Ovary (tissue), 10 donors: ENCODE measurements at regions of chr11 and their contacts with region 1.

Region 1: DNA sequence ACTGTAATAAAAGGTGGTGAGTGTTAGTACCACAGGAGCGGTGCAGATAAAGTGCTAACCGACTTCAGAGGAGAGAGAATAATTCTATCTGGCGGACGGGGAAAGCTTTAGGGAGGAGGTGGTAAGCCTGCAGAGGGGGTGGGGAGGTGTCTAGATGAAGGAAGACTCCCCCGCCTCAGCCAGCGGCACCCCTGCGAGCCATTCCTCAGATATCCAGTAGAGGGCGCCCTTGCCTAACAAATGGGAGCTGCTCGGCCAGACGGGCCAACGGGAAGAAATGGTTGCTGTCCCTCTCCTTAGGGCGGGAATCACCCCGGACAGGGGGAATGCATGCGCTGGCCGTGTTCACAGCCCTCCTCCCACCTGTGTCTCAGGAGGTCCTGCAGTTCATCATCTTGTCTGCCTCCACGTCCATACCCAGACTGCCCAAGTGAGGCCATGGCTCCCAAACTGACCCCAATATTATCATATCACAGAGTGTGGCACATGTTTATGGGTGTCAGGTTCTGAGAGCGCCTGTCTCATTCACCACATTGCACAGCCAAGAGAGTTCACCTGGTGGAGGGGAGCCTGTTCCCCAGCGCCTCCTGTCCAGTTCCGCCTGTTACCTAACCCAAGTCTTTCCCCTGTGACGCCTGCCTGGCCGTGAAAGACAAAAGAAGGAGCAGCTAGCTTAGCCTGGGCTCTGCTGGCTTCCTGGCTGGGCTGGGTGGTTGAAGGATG is 85.5 kb downstream of the ST3GAL4 start:
- DNase-seq: peak; percentile 84 to 94 (median 89)
- H3K4me3 ChIP-seq: no peak overlapping the region
- H3K27ac ChIP-seq: no peak overlapping the region
- H3K4me1 ChIP-seq: peaks cover 2% of the 10 kb centered on the region
- H3K27me3 ChIP-seq: no peaks in the 10 kb centered on the region
- CTCF ChIP-seq: peak; percentile 94 to 97 (median 95)
- EP300 ChIP-seq: no peak
- POLR2A ChIP-seq: peak; percentile 12

Region 2: GRCh38 chr11:126711977-126712625 is 271.1 kb after region 1 on chr11:
- intact Hi-C with region 1: no loop called
- DNase-seq: no peak
- H3K4me3 ChIP-seq: no peak overlapping the region
- H3K27ac ChIP-seq: no peak overlapping the region
- H3K4me1 ChIP-seq: no peaks in the 10 kb centered on the region
- H3K27me3 ChIP-seq: no peaks in the 10 kb centered on the region
- CTCF ChIP-seq: no peak
- EP300 ChIP-seq: no peak
- POLR2A ChIP-seq: no peak

Region 3: DNA sequence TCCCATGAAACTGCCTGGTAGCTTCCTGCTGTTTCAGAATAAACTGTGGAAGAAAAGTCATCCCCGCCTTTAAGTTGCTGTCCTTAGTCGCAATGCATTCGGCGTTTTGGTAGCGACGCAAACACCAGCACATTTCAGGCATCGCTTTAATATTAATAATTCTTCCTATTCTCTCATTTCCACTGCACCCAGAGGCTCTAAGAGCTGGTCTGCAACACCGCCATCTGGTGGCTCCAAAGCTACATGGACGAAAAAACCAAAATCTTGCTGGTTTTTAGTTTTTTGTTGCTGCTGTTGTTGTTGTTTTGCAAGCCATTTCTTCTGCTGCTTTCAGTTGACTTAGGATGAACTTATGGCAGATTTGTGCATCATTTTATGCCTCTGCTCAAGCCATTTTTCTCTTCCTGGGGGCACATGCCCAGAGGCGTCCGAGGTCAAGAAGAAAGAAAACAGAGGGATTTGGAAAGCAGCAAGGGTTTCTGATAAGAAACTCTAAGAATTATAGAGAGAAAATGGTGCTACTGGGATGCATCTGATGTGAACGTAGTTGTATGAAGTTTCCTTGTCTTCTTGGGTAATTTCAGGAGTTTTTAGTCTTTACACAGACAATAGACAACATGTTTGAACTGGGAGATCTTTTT is 905.0 kb after region 1 on chr11:
- intact Hi-C with region 1: loop called in 1 of 4 experiments (anchors 10 kb)
- DNase-seq: peak in 2 of 5 donors; percentile 11 to 18
- H3K4me3 ChIP-seq: no peak overlapping the region
- H3K27ac ChIP-seq: no peak overlapping the region
- H3K4me1 ChIP-seq: no peaks in the 10 kb centered on the region
- H3K27me3 ChIP-seq: no peaks in the 10 kb centered on the region
- CTCF ChIP-seq: peak in 2 of 3 donors; percentile 12 to 25
- EP300 ChIP-seq: no peak
- POLR2A ChIP-seq: no peak